ENCODE measurements at regions of chr7 and their contacts with region 1.

Region 1: GRCh38 chr7:106346678-106347217 is 62.0 kb upstream of the NAMPT start:
- DNase-seq: peak; percentile 93
- H3K4me3 Mint-ChIP-seq: peak overlapping the region; percentile 72
- H3K27ac Mint-ChIP-seq: peak overlapping the region; percentile 99
- H3K4me1 Mint-ChIP-seq: peaks cover 48% of the 10 kb centered on the region
- H3K27me3 Mint-ChIP-seq: no peaks in the 10 kb centered on the region

Region 2: DNA sequence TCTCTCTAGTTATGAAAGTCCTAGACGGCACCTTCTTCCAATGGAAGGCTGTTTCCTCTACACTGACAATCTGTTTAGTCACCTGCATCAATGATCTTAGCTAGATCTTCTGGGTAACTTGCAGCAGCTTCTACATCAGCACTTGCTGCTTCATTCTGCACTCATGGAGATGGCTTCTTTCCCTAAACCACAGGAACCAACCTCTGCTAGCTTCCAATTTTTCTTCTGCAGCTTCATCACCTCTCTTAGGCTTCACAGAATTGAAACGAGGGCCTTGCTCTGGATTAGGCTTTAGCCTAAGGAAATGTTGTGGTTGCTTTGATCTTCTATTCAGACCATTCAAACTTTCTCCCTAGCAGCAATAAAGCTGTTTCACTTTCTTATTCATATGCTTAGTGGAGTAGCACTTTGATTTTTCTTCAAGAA is 86.6 kb before region 1 on chr7:
- intact Hi-C with region 1: loop called (anchors 1 kb)
- DNase-seq: peak; percentile 73
- H3K4me3 Mint-ChIP-seq: peak overlapping the region; percentile 62
- H3K27ac Mint-ChIP-seq: peak overlapping the region; percentile 78
- H3K4me1 Mint-ChIP-seq: peaks cover 37% of the 10 kb centered on the region
- H3K27me3 Mint-ChIP-seq: no peaks in the 10 kb centered on the region

Region 3: GRCh38 chr7:106294337-106294736 is 52.4 kb before region 1 on chr7:
- intact Hi-C with region 1: no loop called
- DNase-seq: no peak
- H3K4me3 Mint-ChIP-seq: no peak overlapping the region
- H3K27ac Mint-ChIP-seq: no peak overlapping the region
- H3K4me1 Mint-ChIP-seq: peaks cover 4% of the 10 kb centered on the region
- H3K27me3 Mint-ChIP-seq: peaks cover 6% of the 10 kb centered on the region

Region 4: DNA sequence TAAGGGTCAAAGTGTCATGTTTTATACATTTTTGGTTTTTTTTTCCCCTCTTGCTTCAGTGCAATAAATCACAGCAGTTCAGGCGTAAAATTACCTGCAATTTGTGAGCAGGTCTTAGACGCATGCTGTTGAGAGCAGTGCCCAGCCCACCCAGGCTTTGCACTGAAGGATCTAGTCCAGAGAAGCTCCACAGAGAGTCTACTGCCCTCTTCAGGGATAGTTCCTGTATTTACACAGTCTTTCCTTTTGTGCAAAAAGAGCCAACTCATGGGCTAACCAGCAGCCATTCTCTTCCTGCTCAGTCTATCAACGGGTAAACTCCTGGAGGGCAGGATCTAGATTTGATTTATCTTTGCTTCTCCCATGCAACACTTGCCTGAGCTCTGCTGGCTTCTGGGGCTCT is 20.3 kb after region 1 on chr7:
- intact Hi-C with region 1: loop called (anchors 1 kb)
- DNase-seq: no peak
- H3K4me3 Mint-ChIP-seq: no peak overlapping the region
- H3K27ac Mint-ChIP-seq: peak overlapping the region; percentile 59
- H3K4me1 Mint-ChIP-seq: peaks cover 26% of the 10 kb centered on the region
- H3K27me3 Mint-ChIP-seq: peaks cover 14% of the 10 kb centered on the region

Region 5: GRCh38 chr7:106425017-106425719 is 78.4 kb after region 1 on chr7:
- intact Hi-C with region 1: loop called (anchors 1 kb)
- DNase-seq: peak; percentile 88
- H3K4me3 Mint-ChIP-seq: peak overlapping the region; percentile 74
- H3K27ac Mint-ChIP-seq: peak overlapping the region; percentile 96
- H3K4me1 Mint-ChIP-seq: peaks cover 74% of the 10 kb centered on the region
- H3K27me3 Mint-ChIP-seq: no peaks in the 10 kb centered on the region

Region 6: DNA sequence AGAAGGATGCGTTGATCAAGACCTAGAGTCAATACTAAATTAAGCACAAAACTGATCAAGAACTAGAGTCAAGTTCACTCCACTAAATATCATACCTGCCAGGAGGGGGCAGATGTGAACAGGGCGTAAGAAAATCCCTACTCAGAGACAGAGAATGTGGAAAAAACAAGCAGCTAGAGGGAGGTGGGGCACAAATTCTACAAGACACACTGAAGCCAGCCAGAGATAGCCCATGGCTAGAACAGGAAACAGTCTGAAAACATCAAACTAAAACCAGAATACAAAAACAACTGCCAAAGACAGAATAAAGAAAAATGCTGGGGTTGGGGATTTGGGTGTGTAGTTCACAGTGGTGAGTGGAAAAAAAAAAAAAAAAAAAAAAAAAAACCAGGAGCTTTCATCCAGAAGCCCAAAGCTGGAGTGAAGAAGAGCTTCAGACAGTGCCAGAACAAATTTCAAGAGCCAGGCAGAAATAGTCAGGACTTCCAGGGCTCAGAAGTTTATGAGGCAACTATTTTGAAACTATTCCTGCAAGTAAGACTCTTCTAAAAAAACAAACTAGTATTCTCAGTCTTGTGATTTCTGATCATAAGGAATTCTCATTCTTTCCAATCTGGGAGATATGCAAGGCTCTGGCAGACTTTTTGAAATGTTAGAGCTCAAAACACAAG is 195.9 kb after region 1 on chr7:
- intact Hi-C with region 1: no loop called
- DNase-seq: peak; percentile 75
- H3K4me3 Mint-ChIP-seq: no peak overlapping the region
- H3K27ac Mint-ChIP-seq: peak overlapping the region; percentile 4
- H3K4me1 Mint-ChIP-seq: peaks cover 8% of the 10 kb centered on the region
- H3K27me3 Mint-ChIP-seq: no peaks in the 10 kb centered on the region

Region 7: GRCh38 chr7:106563466-106564150 is 216.9 kb after region 1 on chr7:
- intact Hi-C with region 1: no loop called
- DNase-seq: no peak
- H3K4me3 Mint-ChIP-seq: no peak overlapping the region
- H3K27ac Mint-ChIP-seq: no peak overlapping the region
- H3K4me1 Mint-ChIP-seq: peaks cover 2% of the 10 kb centered on the region
- H3K27me3 Mint-ChIP-seq: no peaks in the 10 kb centered on the region

Region 8: DNA sequence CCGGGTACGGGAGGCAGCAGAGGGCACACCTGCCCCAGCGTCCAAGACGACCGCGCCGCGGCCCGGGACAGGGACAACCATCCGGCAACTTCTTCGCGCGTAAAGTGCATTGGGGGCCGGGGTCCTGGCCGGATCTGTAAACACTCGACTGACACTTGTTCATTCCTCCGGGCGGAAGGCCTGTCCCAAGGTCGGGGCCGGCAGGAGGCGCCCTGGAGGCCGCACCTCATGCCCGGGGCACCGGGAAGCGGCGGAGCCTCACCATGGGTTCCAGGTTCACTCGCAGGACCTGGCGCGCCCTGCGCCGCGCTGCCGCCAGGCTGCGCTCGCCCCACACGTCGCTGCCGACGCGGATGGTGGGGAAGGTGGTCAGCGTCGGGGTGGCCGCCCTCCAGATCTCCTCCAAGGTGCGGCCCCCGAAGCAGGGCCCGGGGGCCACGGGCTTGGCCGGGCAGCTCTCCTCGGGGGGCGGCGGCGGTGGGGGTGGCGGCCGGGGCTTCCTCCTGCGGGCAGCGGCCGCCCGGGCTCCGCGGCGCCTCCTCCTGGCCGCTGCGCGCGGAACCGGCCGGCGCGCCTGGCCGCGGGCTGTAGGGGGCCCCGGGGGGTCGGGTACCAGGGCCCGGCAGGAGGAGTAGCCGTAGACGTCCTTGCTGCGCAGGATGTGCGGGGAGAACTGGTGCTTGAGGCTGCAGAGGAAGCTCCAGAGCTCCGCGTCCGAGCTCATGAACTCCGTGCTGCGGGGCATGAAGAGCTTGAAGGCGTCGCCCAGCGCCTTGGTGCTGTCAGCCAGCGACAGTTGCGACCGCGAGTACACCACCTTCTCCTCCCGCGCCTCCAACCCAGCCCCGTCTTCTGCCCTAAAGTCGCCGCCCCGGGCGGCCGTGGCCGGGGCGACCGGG is 313.5 kb after region 1 on chr7:
- intact Hi-C with region 1: loop called (anchors 2 kb)
- DNase-seq: peak; percentile 94
- H3K4me3 Mint-ChIP-seq: peak overlapping the region; percentile 88
- H3K27ac Mint-ChIP-seq: peak overlapping the region; percentile 94
- H3K4me1 Mint-ChIP-seq: peaks cover 27% of the 10 kb centered on the region
- H3K27me3 Mint-ChIP-seq: no peaks in the 10 kb centered on the region

Region 9: DNA sequence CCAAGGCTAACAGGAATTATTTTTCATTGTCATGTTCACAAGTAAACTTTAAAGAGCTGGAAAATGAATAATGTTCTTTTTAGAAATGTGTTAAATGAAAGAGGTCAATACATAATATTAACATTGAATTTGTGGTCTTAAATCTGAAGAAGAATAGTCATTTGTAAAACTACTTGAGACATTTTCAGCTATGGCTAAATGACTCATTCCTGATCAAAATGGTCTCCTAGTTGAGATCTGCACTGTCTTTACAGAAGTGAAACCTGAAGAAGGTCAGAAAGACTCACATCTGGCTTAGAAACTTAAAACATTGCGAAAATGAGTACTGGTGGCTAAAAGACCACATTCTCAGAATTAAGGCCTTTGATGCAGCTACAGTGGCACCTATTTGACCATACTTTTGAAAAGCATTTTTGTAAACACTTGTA is 524.2 kb after region 1 on chr7:
- intact Hi-C with region 1: loop called (anchors 2 kb)
- DNase-seq: peak; percentile 63
- H3K4me3 Mint-ChIP-seq: peak overlapping the region; percentile 36
- H3K27ac Mint-ChIP-seq: peak overlapping the region; percentile 68
- H3K4me1 Mint-ChIP-seq: peaks cover 54% of the 10 kb centered on the region
- H3K27me3 Mint-ChIP-seq: no peaks in the 10 kb centered on the region

Measured in activated CD4-positive, alpha-beta T cell treated with anti-CD3 and anti-CD28 coated beads, Interleukin-2, amount 10 ng/mL, durations not matched to agents 24 days and 14 days (primary cell).